Psoas muscle (tissue), 8 donors: ENCODE measurements at regions of chr18 and their contacts with region 1.

Region 1: GRCh38 chr18:11324956-11325873 is 175.8 kb upstream of the PIEZO2 start:
- DNase-seq: no peak
- ATAC-seq: no peak
- H3K4me3 ChIP-seq: no peak overlapping the region
- H3K27ac ChIP-seq: peak overlapping the region; percentile 62
- H3K4me1 ChIP-seq: peaks cover 24% of the 10 kb centered on the region
- H3K27me3 ChIP-seq: no peaks in the 10 kb centered on the region
- CTCF ChIP-seq: no peak

Region 2: DNA sequence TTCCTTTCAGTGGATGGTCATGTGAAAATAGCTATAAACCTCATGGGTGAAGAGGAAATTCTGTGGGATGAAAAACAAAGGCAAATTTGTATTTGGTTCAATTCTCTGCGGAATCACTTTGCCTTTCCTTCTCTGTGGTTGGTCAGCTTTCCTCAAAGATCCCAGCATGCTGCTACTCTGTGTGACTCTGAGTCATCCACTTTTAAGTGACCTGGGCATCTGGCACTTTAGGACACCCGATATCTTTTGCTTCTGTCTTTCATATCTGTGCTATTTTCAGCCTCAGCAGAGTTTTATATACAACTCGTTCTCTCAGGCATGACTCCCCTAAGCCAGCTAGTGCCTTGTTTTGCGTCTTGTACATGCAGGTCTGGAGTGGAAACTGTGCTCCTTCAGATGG is 41.2 kb after region 1 on chr18:
- intact Hi-C with region 1: loop called (anchors 5 kb)
- DNase-seq: no peak
- ATAC-seq: peak; percentile 99 to 100 (median 100)
- H3K4me3 ChIP-seq: peak overlapping the region; percentile 31
- H3K27ac ChIP-seq: peak overlapping the region; percentile 84
- H3K4me1 ChIP-seq: peaks cover 26% of the 10 kb centered on the region
- H3K27me3 ChIP-seq: no peaks in the 10 kb centered on the region
- CTCF ChIP-seq: no peak

Region 3: DNA sequence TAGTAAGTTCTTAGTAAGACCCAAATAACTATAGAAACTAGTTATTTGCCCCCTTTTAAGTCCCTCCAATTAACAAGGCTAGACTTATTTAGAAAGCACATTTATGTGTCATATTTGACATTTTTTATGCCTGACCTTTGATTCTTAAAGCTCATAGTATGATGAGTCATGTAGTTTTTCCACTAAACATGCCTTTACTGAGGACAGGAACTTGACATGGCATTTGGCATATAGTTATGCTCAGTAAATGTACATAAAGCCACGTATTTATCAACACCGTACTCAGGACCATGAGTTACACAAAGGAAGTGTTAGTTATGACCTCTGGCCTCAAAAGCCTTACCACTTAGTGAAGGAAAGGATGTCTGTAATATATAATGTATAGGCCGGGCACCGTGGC is 442.7 kb after region 1 on chr18:
- intact Hi-C with region 1: no loop called
- DNase-seq: no peak
- ATAC-seq: no peak
- H3K4me3 ChIP-seq: no peak overlapping the region
- H3K27ac ChIP-seq: no peak overlapping the region
- H3K4me1 ChIP-seq: no peaks in the 10 kb centered on the region
- H3K27me3 ChIP-seq: no peaks in the 10 kb centered on the region
- CTCF ChIP-seq: no peak